ENCODE measurements at regions of chr10 and their contacts with region 1.

Region 1: GRCh38 chr10:34280599-34281374 is 534.3 kb downstream of the PARD3 start:
- DNase-seq: peak; percentile 99
- H3K4me3 Mint-ChIP-seq: peak overlapping the region; percentile 22
- H3K27ac Mint-ChIP-seq: peak overlapping the region; percentile 98
- H3K4me1 Mint-ChIP-seq: peaks cover 27% of the 10 kb centered on the region
- H3K27me3 Mint-ChIP-seq: no peaks in the 10 kb centered on the region
- CTCF ChIP-seq: peak; percentile 46

Region 2: GRCh38 chr10:34356463-34356862 is 75.7 kb after region 1 on chr10:
- CTCF ChIA-PET with region 1: no interaction called
- POLR2A ChIA-PET with region 1: no interaction called
- intact Hi-C with region 1: no loop called
- DNase-seq: no peak
- H3K4me3 Mint-ChIP-seq: no peak overlapping the region
- H3K27ac Mint-ChIP-seq: no peak overlapping the region
- H3K4me1 Mint-ChIP-seq: no peaks in the 10 kb centered on the region
- H3K27me3 Mint-ChIP-seq: no peaks in the 10 kb centered on the region
- CTCF ChIP-seq: no peak

Region 3: GRCh38 chr10:34489973-34490745 is 209.4 kb after region 1 on chr10:
- CTCF ChIA-PET with region 1: no interaction called
- POLR2A ChIA-PET with region 1: no interaction called
- intact Hi-C with region 1: loop called (anchors 10 kb)
- DNase-seq: peak; percentile 66
- H3K4me3 Mint-ChIP-seq: peak overlapping the region; percentile 57
- H3K27ac Mint-ChIP-seq: peak overlapping the region; percentile 79
- H3K4me1 Mint-ChIP-seq: peaks cover 24% of the 10 kb centered on the region
- H3K27me3 Mint-ChIP-seq: no peaks in the 10 kb centered on the region
- CTCF ChIP-seq: no peak

Measured in MCF 10A (cell line).